PC-3 (cell line): ENCODE measurements at regions of chr6 and their contacts with region 1.

Region 1: GRCh38 chr6:109507490-109508072 is 24.6 kb upstream of the ZBTB24 start:
- DNase-seq: no peak
- ATAC-seq: no peak
- H3K4me3 ChIP-seq: no peak overlapping the region
- H3K27ac ChIP-seq: no peak overlapping the region
- H3K4me1 ChIP-seq: peaks cover 17% of the 10 kb centered on the region
- H3K27me3 ChIP-seq: no peaks in the 10 kb centered on the region
- CTCF ChIP-seq: no peak

Region 2: GRCh38 chr6:109362102-109362884 is 145.3 kb before region 1 on chr6:
- CTCF ChIA-PET with region 1: no interaction called
- POLR2A ChIA-PET with region 1: no interaction called
- intact Hi-C with region 1: no loop called
- DNase-seq: no peak
- ATAC-seq: no peak
- H3K4me3 ChIP-seq: no peak overlapping the region
- H3K27ac ChIP-seq: no peak overlapping the region
- H3K4me1 ChIP-seq: no peaks in the 10 kb centered on the region
- H3K27me3 ChIP-seq: no peaks in the 10 kb centered on the region
- CTCF ChIP-seq: no peak

Region 3: GRCh38 chr6:109736273-109737025 is 228.9 kb after region 1 on chr6:
- CTCF ChIA-PET with region 1: no interaction called
- POLR2A ChIA-PET with region 1: no interaction called
- intact Hi-C with region 1: no loop called
- DNase-seq: no peak
- ATAC-seq: no peak
- H3K4me3 ChIP-seq: no peak overlapping the region
- H3K27ac ChIP-seq: no peak overlapping the region
- H3K4me1 ChIP-seq: no peaks in the 10 kb centered on the region
- H3K27me3 ChIP-seq: no peaks in the 10 kb centered on the region
- CTCF ChIP-seq: no peak

Region 4: GRCh38 chr6:109877028-109878006 is 369.7 kb after region 1 on chr6:
- CTCF ChIA-PET with region 1: no interaction called
- POLR2A ChIA-PET with region 1: interaction called, 17 read pairs
- intact Hi-C with region 1: no loop called
- DNase-seq: no peak
- ATAC-seq: no peak
- H3K4me3 ChIP-seq: no peak overlapping the region
- H3K27ac ChIP-seq: no peak overlapping the region
- H3K4me1 ChIP-seq: no peaks in the 10 kb centered on the region; the same call in 1 of the 2 replicates
- H3K27me3 ChIP-seq: no peaks in the 10 kb centered on the region
- CTCF ChIP-seq: no peak